ENCODE measurements at regions of chr5 and their contacts with region 1.

Region 1: DNA sequence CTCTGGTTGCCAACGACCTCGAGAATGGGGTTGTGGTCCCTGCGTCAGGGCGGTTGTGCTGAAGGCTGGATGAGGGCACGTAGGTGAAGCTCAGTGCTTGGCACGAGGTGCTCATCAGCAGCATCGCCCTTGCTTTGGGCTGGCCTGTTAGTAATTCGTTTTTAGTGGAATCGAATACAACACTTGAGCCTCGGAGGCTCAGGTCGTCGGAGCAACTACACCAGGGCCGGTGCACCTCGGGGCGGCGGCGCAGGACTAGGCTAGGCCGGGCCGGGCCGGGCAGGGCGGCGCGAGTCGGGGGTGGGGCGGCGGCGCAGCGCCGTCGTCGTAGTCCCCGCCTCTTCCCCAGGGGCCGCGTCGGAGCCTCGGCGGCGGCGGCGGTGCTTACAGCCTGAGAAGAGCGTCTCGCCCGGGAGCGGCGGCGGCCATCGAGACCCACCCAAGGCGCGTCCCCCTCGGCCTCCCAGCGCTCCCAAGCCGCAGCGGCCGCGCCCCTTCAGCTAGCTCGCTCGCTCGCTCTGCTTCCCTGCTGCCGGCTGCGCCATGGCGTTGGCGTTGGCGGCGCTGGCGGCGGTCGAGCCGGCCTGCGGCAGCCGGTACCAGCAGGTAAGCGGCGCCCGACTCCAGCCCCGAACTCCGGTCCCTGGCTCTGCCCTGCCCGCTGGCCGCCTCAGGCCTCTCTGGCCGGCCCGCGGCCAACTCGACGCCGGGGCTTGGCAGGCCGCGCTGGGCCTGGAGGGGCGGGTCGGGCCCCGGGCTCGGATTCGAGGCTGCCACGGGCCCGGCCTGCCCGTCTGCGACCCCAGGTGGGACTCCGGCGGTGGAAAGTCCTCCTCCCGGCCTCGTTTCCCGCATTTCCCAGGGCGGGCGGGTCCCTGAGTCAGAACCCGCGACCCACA is at the start of gene NDFIP1:
- DNase-seq: peak; percentile 90 to 94 (median 92)
- ATAC-seq: peak; percentile 89 to 99 (median 97)
- H3K4me3 ChIP-seq: peak within 1 kb of the TSS; percentile 73 to 92 (median 85)
- H3K27ac ChIP-seq: peak within 1 kb of the TSS; percentile 94 to 99 (median 98)
- H3K4me1 ChIP-seq: peaks cover 6 to 54% (median 32%) of the 10 kb centered on the region in 12 donors
- H3K27me3 ChIP-seq: no peaks in the 10 kb centered on the region
- CTCF ChIP-seq: peak in 5 of 12 donors; percentile 5 to 27 (median 20)
- POLR2A ChIP-seq: peak; percentile 58 to 92
- total RNA-seq, gene NDFIP1: 51.4 to 69.3 (median 62.1) TPM

Region 2: GRCh38 chr5:142012792-142013388 is 95.8 kb before region 1 on chr5 and contains the start of gene GNPDA1:
- intact Hi-C with region 1: loop called in 6 of 10 experiments (anchors 2 to 10 kb)
- DNase-seq: peak; percentile 85 to 90 (median 88)
- ATAC-seq: peak; percentile 74 to 94 (median 90)
- H3K4me3 ChIP-seq: peak within 1 kb of the TSS; percentile 42 to 98 (median 78)
- H3K27ac ChIP-seq: peak within 1 kb of the TSS; percentile 47 to 94 (median 85)
- H3K4me1 ChIP-seq: peaks cover 0 to 53% (median 15%) of the 10 kb centered on the region in 12 donors
- H3K27me3 ChIP-seq: no peaks in the 10 kb centered on the region
- CTCF ChIP-seq: peak in 5 of 12 donors; percentile 8 to 39 (median 31)
- POLR2A ChIP-seq: peak in 1 of 2 donors; percentile 39
- total RNA-seq, gene GNPDA1: 14.1 to 43.0 (median 26.1) TPM

Region 3: DNA sequence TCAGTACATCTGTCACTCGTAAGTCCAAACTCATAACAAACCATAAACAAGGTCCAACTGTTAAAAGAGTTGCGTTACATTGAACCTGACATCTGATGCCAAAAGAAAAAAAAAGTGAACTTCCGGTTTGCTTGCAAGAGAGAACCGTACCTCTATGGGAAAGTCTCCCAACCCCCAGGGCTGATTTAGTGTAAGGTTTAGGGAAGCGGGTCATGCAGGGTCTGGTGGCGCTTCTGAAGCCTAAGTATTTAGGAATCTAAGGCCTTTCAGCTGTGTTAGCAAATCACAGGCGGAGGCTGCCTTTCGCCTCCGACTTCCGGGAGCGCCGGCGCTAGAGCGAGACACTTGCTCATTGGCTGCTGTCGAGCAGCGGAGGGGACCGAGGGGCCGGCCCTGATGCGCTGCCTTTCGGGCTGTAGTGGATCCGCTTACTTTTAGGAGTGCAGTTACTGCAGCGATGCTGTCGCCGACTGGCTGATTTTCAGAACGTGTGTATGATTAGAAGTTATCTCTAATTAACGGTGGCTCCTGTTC is 83.8 kb before region 1 on chr5:
- intact Hi-C with region 1: loop called in 1 of 10 experiments (anchors 5 kb)
- DNase-seq: peak; percentile 87 to 94 (median 93)
- ATAC-seq: peak; percentile 99 to 100 (median 100)
- H3K4me3 ChIP-seq: peak overlapping the region; percentile 24 to 61 (median 54)
- H3K27ac ChIP-seq: peak overlapping the region; percentile 72 to 91 (median 85)
- H3K4me1 ChIP-seq: peaks cover 0 to 12% (median 0%) of the 10 kb centered on the region in 12 donors
- H3K27me3 ChIP-seq: no peaks in the 10 kb centered on the region
- CTCF ChIP-seq: no peak
- POLR2A ChIP-seq: peak in 1 of 2 donors; percentile 45

Region 4: DNA sequence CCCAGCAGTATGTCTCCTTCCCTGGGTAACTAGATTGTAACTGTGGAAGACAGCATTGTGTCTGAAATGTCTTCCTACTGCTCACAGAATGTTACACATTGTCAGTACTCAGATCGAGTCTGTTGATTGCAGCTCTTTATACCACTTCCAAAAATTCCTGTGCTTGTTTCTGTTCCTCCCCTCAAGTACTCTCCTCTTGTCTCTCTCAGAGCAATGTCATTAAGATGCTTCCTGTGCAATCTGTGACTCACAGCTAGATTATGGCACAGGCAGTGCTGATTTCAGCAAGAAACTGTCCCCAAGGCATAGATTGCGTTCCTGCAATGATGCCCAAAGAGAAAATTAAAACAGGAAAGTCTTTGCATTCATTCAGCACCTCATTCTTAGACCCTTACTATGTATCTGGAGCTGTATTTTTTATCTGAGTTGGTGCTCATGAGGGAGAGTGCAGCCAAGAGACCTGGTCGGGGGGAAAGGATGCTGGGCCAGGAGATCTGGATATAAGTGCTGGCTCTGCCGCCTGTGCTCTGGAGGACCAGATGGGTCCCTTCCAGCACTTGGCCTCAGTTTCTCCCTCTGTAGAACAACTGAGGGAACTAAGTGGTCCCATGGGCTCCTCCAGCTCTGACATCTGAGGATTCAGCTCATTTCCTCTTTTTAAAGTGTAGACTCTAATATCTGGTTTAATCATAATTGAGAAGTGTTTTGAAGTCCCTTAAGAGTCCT is 55.1 kb before region 1 on chr5:
- intact Hi-C with region 1: loop called in 1 of 10 experiments (anchors 5 kb)
- DNase-seq: peak in 3 of 5 donors; percentile 22 to 33 (median 30)
- ATAC-seq: peak; percentile 48 to 91 (median 84)
- H3K4me3 ChIP-seq: no peak overlapping the region
- H3K27ac ChIP-seq: peak overlapping the region in 5 of 12 donors; percentile 20 to 79 (median 39)
- H3K4me1 ChIP-seq: peaks cover 0 to 32% (median 10%) of the 10 kb centered on the region in 12 donors
- H3K27me3 ChIP-seq: no peaks in the 10 kb centered on the region
- CTCF ChIP-seq: no peak
- POLR2A ChIP-seq: no peak

Region 5: DNA sequence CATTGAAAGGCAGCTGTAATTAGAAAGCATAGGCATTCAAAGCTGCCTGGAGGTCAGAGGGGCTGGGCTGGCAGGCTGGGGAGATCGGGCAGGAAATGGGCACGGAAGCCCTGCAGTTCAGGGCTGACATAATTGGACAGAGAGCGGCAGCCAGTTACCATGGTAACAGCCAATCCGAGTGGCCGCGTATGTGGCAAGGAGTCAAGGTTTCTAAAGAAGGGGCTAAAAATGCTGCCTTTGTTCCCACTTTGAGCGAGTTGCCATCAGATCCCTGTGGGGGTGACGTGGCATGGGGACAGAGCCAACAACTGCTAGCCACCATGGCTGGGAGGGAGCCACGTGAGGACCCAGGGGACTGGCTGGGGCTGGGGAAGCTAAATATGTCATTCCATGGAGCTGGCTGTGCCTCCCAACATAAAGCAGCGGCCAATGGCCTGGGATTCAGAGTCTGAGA is 44.8 kb before region 1 on chr5:
- intact Hi-C with region 1: loop called in 2 of 10 experiments (anchors 5 kb)
- DNase-seq: peak; percentile 75 to 88 (median 79)
- ATAC-seq: peak; percentile 82 to 90 (median 84)
- H3K4me3 ChIP-seq: peak overlapping the region in 10 of 12 donors; percentile 15 to 51 (median 35)
- H3K27ac ChIP-seq: peak overlapping the region; percentile 14 to 86 (median 66)
- H3K4me1 ChIP-seq: peaks cover 0 to 31% (median 14%) of the 10 kb centered on the region in 12 donors
- H3K27me3 ChIP-seq: no peaks in the 10 kb centered on the region
- CTCF ChIP-seq: no peak
- POLR2A ChIP-seq: no peak

Measured in heart left ventricle (tissue), 16 donors.